T-cell (primary cell): ENCODE measurements at regions of chr16 and their contacts with region 1.

Region 1: DNA sequence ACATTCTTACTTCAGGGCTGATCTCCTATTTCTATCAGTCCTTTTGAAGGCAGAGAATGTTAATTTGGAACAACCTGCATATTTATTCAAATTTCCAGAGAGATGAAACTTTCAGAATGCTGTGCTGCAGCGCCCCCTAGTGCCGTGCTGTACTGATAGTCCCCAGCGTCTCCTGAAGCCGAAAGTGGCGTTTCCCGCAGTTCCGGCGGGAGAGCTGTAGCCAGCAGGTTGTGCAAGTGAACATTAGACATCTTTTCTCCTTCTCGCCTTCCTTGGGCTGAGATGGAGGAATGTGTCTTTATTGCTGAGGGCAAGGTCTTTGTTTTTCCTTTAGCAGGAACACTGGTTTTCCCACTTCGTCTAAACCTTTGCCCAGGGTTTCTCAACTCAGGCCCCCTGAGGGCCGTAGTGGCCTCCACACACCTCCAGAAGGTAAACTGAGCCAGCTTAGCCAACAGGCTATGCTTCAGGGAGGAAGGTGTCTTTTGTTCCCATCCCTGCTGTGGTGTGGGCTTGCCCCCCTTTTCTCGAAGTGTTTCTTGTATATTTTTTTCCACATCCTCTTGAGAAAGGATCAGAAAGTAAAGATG is 26.4 kb downstream of the USP10 start:
- DNase-seq: peak; percentile 57 to 90 (median 78)
- ATAC-seq: peak; percentile 68 to 81 (median 76)
- H3K4me3 ChIP-seq: no peak overlapping the region
- H3K4me3 Mint-ChIP-seq: peak overlapping the region; percentile 34 to 49 (median 48)
- H3K27ac ChIP-seq: no peak overlapping the region
- H3K27ac Mint-ChIP-seq: no peak overlapping the region
- H3K4me1 ChIP-seq: peaks cover 14 to 17% of the 10 kb centered on the region in 2 experiments
- H3K4me1 Mint-ChIP-seq: peaks cover 79 to 82% (median 81%) of the 10 kb centered on the region in 3 donors
- H3K27me3 ChIP-seq: no peaks in the 10 kb centered on the region
- H3K27me3 Mint-ChIP-seq: no peaks in the 10 kb centered on the region

Region 2: GRCh38 chr16:84672276-84673202 is 53.6 kb before region 1 on chr16:
- CTCF ChIA-PET with region 1: interaction called, 11 to 34 read pairs
- POLR2A ChIA-PET with region 1: no interaction called
- DNase-seq: peak; percentile 43 to 87 (median 74)
- ATAC-seq: peak; percentile 88 to 91 (median 90)
- H3K4me3 ChIP-seq: no peak overlapping the region
- H3K4me3 Mint-ChIP-seq: no peak overlapping the region
- H3K27ac ChIP-seq: no peak overlapping the region
- H3K27ac Mint-ChIP-seq: peak overlapping the region in 1 of 2 donors; percentile 19
- H3K4me1 ChIP-seq: peaks cover 0 to 8% of the 10 kb centered on the region in 2 experiments
- H3K4me1 Mint-ChIP-seq: peaks cover 5 to 11% (median 7%) of the 10 kb centered on the region in 3 donors
- H3K27me3 ChIP-seq: no peaks in the 10 kb centered on the region
- H3K27me3 Mint-ChIP-seq: no peaks in the 10 kb centered on the region

Region 3: DNA sequence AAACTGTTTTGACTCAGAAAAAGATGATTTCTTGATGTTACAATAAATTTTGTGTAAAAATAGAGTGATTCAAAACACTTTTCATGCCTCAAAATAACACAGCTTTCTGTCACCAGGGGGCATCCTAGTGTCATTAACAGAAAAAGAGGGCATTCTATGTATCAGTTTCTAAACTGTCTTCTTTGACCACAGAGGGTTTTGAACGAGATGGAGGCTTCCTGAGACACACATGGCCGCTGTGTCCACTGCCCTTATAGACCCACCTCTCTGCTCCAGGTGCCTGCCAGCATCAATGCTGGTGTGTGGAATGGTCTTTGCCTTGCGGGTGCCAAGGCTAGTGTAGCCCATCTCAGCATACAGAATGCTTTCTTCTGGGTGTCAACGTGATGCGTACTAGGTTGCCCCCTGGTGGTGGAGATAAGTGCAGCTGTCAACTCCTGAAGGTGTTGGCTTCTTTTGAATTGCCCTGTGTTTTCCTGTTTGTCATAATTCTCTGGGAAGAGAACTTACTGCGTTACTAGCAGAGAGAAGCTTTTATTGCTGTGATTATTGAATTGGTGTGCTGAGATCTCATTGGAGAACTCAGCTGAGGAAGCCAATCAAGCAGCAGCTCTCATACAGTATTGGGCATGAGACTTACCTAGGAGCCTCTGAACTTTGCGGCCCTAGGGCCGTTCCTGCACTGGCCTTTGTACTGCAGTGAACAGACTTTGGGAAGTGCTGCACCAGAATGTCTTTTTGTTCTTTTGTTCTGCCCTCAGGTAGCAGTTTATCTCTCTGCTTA is 12.3 kb after region 1 on chr16:
- CTCF ChIA-PET with region 1: interaction called, 6 to 44 read pairs
- POLR2A ChIA-PET with region 1: no interaction called
- DNase-seq: peak; percentile 41 to 90 (median 67)
- ATAC-seq: peak; percentile 70 to 78 (median 72)
- H3K4me3 ChIP-seq: no peak overlapping the region
- H3K4me3 Mint-ChIP-seq: peak overlapping the region in 1 of 3 donors; percentile 18
- H3K27ac ChIP-seq: no peak overlapping the region
- H3K27ac Mint-ChIP-seq: peak overlapping the region in 1 of 2 donors; percentile 69
- H3K4me1 ChIP-seq: peaks cover 6 to 31% of the 10 kb centered on the region in 2 experiments
- H3K4me1 Mint-ChIP-seq: peaks cover 43 to 57% (median 52%) of the 10 kb centered on the region in 3 donors
- H3K27me3 ChIP-seq: no peaks in the 10 kb centered on the region
- H3K27me3 Mint-ChIP-seq: no peaks in the 10 kb centered on the region